ENCODE measurements at regions of chr22 and their contacts with region 1.

Region 1: DNA sequence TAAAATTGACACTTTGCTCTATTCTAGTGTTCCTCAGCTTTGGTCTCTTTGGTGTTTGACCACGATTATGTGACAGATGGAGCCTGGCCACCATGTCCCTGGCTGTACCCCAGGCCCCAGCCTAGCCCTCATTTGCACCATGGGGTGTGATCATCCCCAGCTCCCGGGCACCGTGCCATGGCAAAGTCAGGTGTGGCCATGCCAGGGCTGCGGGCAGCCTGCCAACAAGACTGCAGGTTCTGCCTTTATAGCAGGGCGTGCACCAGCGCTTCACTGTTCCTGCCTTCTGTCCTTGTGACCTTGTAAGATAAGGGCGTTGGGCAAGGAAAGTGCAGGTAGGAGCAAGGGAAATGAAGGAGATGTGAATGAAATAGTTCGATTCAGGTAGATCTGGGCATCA is 22.4 kb upstream of the APOBEC3A start:
- DNase-seq: peak in 1 of 10 donors; percentile 99
- H3K4me3 ChIP-seq: no peak overlapping the region
- H3K27ac ChIP-seq: peak overlapping the region in 1 of 59 donors; percentile 55
- H3K27me3 ChIP-seq: no peaks in the 10 kb centered on the region
- CTCF ChIP-seq: no peak

Region 2: DNA sequence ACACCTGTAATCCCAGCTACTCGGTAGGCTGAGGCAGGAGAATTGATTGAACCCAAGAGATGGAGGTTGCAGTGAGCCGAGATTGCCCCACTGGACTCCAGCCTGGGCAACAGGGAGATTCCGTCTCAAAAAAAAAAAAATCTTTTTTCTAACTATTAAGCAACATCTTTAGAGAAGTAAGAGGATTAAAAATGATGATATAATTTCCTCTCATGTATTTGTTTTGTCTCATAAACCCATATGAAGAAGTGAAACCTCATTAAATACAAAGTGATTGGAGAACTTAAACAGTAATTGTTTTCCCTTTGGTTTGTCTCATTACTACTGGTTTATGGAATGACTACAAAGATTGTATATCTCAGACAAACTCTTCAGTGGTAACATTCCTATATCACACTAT is 385.5 kb before region 1 on chr22:
- intact Hi-C with region 1: no loop called
- DNase-seq: no peak
- H3K4me3 ChIP-seq: no peak overlapping the region
- H3K27ac ChIP-seq: no peak overlapping the region
- H3K27me3 ChIP-seq: no peaks in the 10 kb centered on the region
- CTCF ChIP-seq: no peak

Region 3: GRCh38 chr22:38996105-38996504 is 61.1 kb after region 1 on chr22:
- intact Hi-C with region 1: loop called in 1 of 2 experiments (anchors 10 kb)
- DNase-seq: no peak
- H3K4me3 ChIP-seq: no peak overlapping the region
- H3K27ac ChIP-seq: no peak overlapping the region
- H3K27me3 ChIP-seq: peaks cover 0 to 20% (median 0%) of the 10 kb centered on the region in 45 donors
- CTCF ChIP-seq: no peak

Measured in dorsolateral prefrontal cortex (tissue), 120 donors.